Natural killer cell (primary cell): ENCODE measurements at regions of chr1 and their contacts with region 1.

Region 1: DNA sequence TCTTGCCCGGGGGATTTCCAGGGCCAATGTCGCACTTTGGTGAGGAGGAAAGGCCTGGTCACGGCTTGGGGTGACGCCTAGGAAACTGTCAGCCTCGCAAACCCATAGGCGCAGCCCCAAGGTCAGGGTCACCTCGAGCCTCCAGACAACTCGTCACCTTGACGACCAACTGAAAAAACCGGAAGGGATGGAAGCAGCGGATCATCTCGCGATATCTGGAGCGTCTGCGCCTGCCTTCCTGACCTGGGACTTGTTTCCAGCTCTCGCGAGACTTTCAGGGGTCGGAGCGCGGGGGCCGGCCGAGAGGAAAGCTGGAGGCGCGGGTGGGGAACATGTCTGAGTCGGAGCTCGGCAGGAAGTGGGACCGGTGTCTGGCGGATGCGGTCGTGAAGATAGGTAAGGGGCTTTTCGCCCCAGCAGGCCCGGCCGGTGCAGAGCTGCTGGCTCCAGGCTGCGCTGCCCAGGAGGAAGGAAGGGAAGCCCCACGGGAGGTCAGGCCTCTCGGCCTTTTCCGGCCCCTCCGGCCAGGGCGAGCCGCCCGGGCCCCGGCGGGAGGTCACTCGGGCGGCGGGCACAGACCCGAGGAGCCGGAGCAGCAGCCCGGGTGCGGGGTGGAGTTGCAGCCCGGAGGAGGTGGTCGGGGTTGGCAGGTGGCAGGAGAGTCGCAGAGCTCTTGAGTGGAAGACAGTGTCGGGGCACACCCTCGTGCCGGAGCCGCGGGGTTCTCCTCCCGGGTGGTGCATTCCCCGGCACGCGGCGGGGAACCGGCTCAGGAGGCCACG is 47.2 kb upstream of the NBL1 start:
- DNase-seq: peak; percentile 94 to 100
- ATAC-seq: peak; percentile 77 to 89 (median 80)
- H3K4me3 ChIP-seq: peak overlapping the region; percentile 78
- H3K4me3 Mint-ChIP-seq: peak overlapping the region; percentile 100
- H3K27ac ChIP-seq: peak overlapping the region; percentile 99
- H3K27ac Mint-ChIP-seq: peak overlapping the region; percentile 98 to 100
- H3K4me1 ChIP-seq: peaks cover 29% of the 10 kb centered on the region
- H3K4me1 Mint-ChIP-seq: peaks cover 39 to 45% of the 10 kb centered on the region in 2 donors
- H3K27me3 ChIP-seq: no peaks in the 10 kb centered on the region
- H3K27me3 Mint-ChIP-seq: no peaks in the 10 kb centered on the region
- CTCF ChIP-seq: no peak

Region 2: GRCh38 chr1:19374083-19374801 is 222.7 kb before region 1 on chr1:
- intact Hi-C with region 1: no loop called
- DNase-seq: peak in 1 of 2 donors; percentile 43
- ATAC-seq: peak in 1 of 3 donors; percentile 32
- H3K4me3 ChIP-seq: no peak overlapping the region
- H3K4me3 Mint-ChIP-seq: no peak overlapping the region
- H3K27ac ChIP-seq: no peak overlapping the region
- H3K27ac Mint-ChIP-seq: no peak overlapping the region
- H3K4me1 ChIP-seq: no peaks in the 10 kb centered on the region
- H3K4me1 Mint-ChIP-seq: peaks cover 25 to 27% of the 10 kb centered on the region in 2 donors
- H3K27me3 ChIP-seq: no peaks in the 10 kb centered on the region
- H3K27me3 Mint-ChIP-seq: no peaks in the 10 kb centered on the region
- CTCF ChIP-seq: no peak

Region 3: DNA sequence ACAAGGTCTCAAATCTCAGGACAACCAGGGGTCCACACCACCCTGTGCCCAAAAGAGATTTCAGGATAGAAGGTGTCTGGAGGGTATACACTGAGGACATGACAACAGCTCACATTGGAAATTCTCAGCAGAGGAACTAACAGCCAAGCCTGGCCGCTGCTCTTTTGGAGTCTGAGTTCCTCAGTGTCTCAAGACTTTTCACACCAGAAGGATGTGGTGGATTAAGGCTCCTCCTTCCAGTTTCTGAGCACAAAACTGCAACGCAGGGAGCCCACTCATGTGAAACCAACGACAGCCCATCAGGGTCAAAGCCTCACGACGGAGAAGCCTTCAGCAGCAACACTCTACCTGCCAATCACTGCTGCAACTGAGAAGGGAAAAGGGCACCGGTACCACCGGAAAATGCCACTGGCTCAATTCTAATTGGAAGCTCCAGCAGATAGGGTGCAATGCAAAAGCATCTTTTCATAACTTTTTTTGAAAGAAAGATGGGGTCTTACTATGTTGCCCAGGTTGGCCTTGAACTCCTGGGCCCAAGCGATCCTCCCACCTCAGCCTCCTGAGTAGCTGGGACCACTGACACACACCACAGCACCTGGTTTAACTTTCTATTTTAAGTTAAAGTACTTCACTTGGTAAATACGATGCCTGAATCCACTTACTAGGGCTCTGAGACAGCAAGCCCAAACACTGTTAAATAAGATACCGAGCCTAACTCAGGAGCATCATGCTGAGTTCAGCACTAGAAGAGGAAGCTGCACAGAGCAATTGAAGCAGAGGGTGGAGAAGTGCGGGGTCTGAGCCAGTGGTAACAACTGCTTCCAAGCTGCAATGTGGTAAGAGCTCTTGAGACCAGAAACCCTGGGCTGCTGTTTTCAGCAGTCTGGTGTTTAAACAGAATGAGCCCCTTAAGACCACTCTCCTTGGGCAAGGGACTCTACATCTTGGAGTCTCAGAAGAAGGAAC is 119.3 kb before region 1 on chr1:
- intact Hi-C with region 1: loop called (anchors 2 kb)
- DNase-seq: peak; percentile 55 to 74
- ATAC-seq: peak; percentile 73 to 85 (median 77)
- H3K4me3 ChIP-seq: peak overlapping the region; percentile 34
- H3K4me3 Mint-ChIP-seq: peak overlapping the region; percentile 88
- H3K27ac ChIP-seq: peak overlapping the region; percentile 97
- H3K27ac Mint-ChIP-seq: peak overlapping the region; percentile 97 to 98
- H3K4me1 ChIP-seq: peaks cover 85% of the 10 kb centered on the region
- H3K4me1 Mint-ChIP-seq: peaks cover 79 to 80% of the 10 kb centered on the region in 2 donors
- H3K27me3 ChIP-seq: no peaks in the 10 kb centered on the region
- H3K27me3 Mint-ChIP-seq: no peaks in the 10 kb centered on the region
- CTCF ChIP-seq: no peak

Region 4: DNA sequence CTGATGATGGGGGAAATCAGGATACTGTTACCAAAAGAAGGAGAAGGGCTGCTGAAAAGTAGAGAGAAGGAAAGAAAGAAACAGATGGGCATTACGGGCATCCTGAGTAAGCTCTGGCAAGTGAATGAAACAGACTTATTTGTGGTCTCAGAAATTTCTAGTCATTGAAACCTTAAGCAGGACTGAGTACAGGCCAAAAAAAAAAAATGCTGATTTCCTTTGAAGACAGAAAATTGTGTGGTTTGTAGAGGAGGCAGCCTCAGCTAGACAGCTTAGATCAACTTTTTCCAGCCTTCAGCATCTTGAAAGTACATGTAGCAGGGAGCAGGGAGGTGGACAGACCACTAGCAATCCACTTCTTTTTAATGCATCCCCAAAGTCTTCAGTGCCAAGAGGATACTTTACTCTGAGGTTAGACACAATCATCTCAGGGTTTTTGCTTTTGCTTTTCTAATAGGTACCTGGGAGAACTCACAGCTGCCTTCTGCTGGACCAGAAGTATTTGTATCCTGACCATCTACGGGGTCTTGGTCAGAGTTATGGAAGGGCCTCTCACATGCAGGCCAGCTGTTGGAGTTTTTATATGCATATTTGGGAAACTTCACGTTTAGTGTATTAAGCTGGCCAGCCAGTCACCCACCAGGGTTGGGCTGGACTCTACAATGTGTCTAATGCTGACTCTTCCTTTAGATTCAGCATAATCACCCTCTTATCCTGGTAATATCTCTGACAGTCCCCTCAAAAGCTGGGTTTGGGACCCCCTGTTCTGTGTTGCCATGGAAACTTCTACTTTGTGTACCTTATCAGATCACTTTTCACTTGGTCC is 100.9 kb before region 1 on chr1:
- intact Hi-C with region 1: no loop called
- DNase-seq: no peak
- ATAC-seq: no peak
- H3K4me3 ChIP-seq: no peak overlapping the region
- H3K4me3 Mint-ChIP-seq: no peak overlapping the region
- H3K27ac ChIP-seq: no peak overlapping the region
- H3K27ac Mint-ChIP-seq: no peak overlapping the region
- H3K4me1 ChIP-seq: no peaks in the 10 kb centered on the region
- H3K4me1 Mint-ChIP-seq: peaks cover 12 to 14% of the 10 kb centered on the region in 2 donors
- H3K27me3 ChIP-seq: no peaks in the 10 kb centered on the region
- H3K27me3 Mint-ChIP-seq: peaks cover 0 to 3% of the 10 kb centered on the region in 2 donors
- CTCF ChIP-seq: no peak

Region 5: GRCh38 chr1:19643602-19644394 is 46.9 kb after region 1 on chr1 and contains the start of gene NBL1:
- intact Hi-C with region 1: loop called (anchors 5 kb)
- DNase-seq: peak; percentile 64 to 87
- ATAC-seq: peak; percentile 86 to 91 (median 88)
- H3K4me3 ChIP-seq: peak within 1 kb of the TSS; percentile 34
- H3K4me3 Mint-ChIP-seq: peak within 1 kb of the TSS; percentile 89
- H3K27ac ChIP-seq: no peak within 1 kb of the TSS
- H3K27ac Mint-ChIP-seq: peak within 1 kb of the TSS; percentile 54 to 88
- H3K4me1 ChIP-seq: peaks cover 18% of the 10 kb centered on the region
- H3K4me1 Mint-ChIP-seq: peaks cover 19 to 23% of the 10 kb centered on the region in 2 donors
- H3K27me3 ChIP-seq: peaks cover 20% of the 10 kb centered on the region
- H3K27me3 Mint-ChIP-seq: peaks cover 11 to 25% of the 10 kb centered on the region in 2 donors
- CTCF ChIP-seq: no peak
- total RNA-seq, gene NBL1: 10.7 to 18.4 (median 11.4) TPM